H1 (cell line): ENCODE measurements at regions of chr10 and their contacts with region 1.

Region 1: GRCh38 chr10:47438857-47439474 is 44.9 kb downstream of the ANXA8 start:
- DNase-seq: peak in 1 of 2 experiments; percentile 25
- H3K4me3 ChIP-seq: no peak overlapping the region
- H3K27ac ChIP-seq: no peak overlapping the region
- H3K4me1 ChIP-seq: no peaks in the 10 kb centered on the region
- H3K27me3 ChIP-seq: no peaks in the 10 kb centered on the region
- CTCF ChIP-seq: peak; percentile 31 to 74 (median 68)
- EP300 ChIP-seq: no peak
- POLR2A ChIP-seq: no peak
- RAD21 ChIP-seq: peak; percentile 65 to 73

Region 2: GRCh38 chr10:47449102-47449979 is 10.4 kb after region 1 on chr10:
- CTCF ChIA-PET with region 1: interaction called, 12 read pairs
- POLR2A ChIA-PET with region 1: no interaction called
- DNase-seq: no peak
- H3K4me3 ChIP-seq: no peak overlapping the region
- H3K27ac ChIP-seq: no peak overlapping the region
- H3K4me1 ChIP-seq: peaks cover 0 to 7% (median 3%) of the 10 kb centered on the region in 4 experiments; a peak in 4 of 7 replicates
- H3K27me3 ChIP-seq: no peaks in the 10 kb centered on the region
- CTCF ChIP-seq: no peak
- EP300 ChIP-seq: no peak
- POLR2A ChIP-seq: no peak
- RAD21 ChIP-seq: no peak